Activated T-helper 2 cell treated with anti-CD3 and anti-CD28 coated beads, Interferon-gamma antibody, Interleukin-2, Interleukin-4, amounts not matched to agents 10 μg/mL and 5 μg/mL and 100 μg/mL, durations not matched to agents 14 hours and 24 hours and 36 hours (primary cell): ENCODE measurements at regions of chr12 and their contacts with region 1.

Region 1: GRCh38 chr12:67441736-67442346 is 172.7 kb downstream of the CAND1 start:
- DNase-seq: peak; percentile 63
- H3K4me3 Mint-ChIP-seq: no peak overlapping the region
- H3K27ac Mint-ChIP-seq: no peak overlapping the region
- H3K4me1 Mint-ChIP-seq: peaks cover 12% of the 10 kb centered on the region
- H3K27me3 Mint-ChIP-seq: peaks cover 36% of the 10 kb centered on the region

Region 2: GRCh38 chr12:66103016-66103913 is 1338.6 kb before region 1 on chr12:
- intact Hi-C with region 1: no loop called
- DNase-seq: no peak
- H3K4me3 Mint-ChIP-seq: no peak overlapping the region
- H3K27ac Mint-ChIP-seq: no peak overlapping the region
- H3K4me1 Mint-ChIP-seq: peaks cover 3% of the 10 kb centered on the region
- H3K27me3 Mint-ChIP-seq: peaks cover 22% of the 10 kb centered on the region

Region 3: DNA sequence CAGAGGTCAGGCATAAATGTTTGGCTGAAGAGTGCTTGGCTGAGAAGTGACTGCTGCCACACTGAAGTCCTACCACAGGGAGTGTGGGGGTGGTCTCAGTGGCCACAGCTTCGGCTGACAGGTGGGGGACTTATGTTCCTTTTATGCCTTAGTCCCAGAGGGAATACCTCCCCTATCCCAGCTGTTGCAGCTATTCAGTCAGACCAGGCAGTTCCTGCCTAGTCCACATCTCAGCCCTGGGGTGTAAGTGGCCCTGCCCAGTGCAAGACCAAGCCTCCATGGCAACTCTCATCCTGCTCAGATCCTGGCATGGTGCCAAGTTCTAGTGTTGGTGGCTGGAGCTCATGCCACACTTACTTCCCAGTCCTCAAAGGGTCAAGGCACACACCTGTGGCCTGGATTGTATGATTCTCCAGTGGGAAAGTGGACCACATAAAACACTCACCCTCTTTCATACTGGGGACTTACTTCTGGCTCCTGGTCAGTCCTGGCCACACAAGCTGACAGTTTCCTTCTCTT is 334.0 kb before region 1 on chr12:
- intact Hi-C with region 1: no loop called
- DNase-seq: no peak
- H3K4me3 Mint-ChIP-seq: no peak overlapping the region
- H3K27ac Mint-ChIP-seq: no peak overlapping the region
- H3K4me1 Mint-ChIP-seq: no peaks in the 10 kb centered on the region
- H3K27me3 Mint-ChIP-seq: no peaks in the 10 kb centered on the region

Region 4: DNA sequence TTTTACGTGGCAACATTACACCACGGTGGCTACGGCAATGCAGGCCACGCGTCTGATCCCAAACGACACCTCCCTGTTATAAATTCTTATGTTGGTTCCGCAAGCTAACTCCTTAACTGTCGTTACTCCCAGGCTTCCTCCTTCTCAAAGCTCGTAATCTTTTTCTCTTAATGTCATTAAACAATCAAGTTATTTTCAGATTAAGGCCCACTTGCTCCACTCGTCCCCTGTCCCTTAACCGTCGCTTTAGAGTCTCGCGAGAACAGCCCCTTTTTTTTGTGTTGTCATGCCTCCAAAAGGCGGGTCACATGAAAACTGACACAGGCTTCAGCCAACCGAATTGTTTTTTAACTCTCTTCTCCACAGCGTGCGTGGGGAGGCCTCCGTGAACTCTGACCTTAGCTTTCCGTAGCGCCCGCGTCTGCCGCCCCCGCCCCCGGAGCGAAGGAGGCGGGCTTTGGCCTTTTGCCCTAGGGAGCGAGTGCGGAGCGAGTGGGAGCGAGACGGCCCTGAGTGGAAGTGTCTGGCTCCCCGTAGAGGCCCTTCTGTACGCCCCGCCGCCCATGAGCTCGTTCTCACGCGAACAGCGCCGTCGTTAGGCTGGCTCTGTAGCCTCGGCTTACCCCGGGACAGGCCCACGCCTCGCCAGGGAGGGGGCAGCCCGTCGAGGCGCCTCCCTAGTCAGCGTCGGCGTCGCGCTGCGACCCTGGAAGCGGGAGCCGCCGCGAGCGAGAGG is 172.8 kb before region 1 on chr12 and contains the start of gene CAND1:
- intact Hi-C with region 1: loop called (anchors 10 kb)
- DNase-seq: peak; percentile 94
- H3K4me3 Mint-ChIP-seq: peak within 1 kb of the TSS; percentile 89
- H3K27ac Mint-ChIP-seq: peak within 1 kb of the TSS; percentile 99
- H3K4me1 Mint-ChIP-seq: peaks cover 31% of the 10 kb centered on the region
- H3K27me3 Mint-ChIP-seq: no peaks in the 10 kb centered on the region
- total RNA-seq, gene CAND1: 197 and 198 TPM in 2 replicates

Region 5: GRCh38 chr12:67355578-67356379 is 86.1 kb before region 1 on chr12:
- intact Hi-C with region 1: loop called (anchors 5 kb)
- DNase-seq: no peak
- H3K4me3 Mint-ChIP-seq: no peak overlapping the region
- H3K27ac Mint-ChIP-seq: no peak overlapping the region
- H3K4me1 Mint-ChIP-seq: peaks cover 24% of the 10 kb centered on the region
- H3K27me3 Mint-ChIP-seq: peaks cover 6% of the 10 kb centered on the region

Region 6: DNA sequence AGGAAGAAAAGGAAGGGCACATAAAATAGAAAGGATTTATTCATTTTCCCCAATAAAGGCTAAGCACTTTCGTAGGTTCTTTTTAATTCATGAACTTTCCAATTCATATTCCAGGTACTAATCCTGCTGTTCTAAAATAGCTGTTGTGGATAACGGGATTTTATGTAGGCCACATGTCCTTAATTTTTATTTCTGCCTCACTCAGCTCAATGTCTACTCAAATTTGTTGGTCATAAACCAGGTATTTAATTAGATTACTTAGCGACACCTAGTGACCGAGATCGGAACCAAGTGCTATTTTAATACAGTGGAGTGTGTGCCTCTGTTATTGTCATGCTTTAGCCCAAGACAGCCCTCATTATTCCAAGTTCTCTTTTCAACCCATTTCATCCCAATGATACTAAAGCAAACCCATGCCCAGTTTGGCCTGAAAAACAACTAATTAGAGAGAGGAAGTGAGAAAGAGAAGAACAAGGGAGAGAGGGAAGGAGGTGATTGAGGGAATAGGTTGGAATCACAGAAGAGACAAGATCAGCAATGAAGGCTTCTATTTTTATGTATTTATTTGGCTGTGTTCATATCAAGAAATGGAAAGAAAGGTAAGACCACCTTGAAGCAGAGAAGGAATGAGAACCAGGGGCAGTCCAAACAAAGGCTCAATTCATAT is 501.5 kb after region 1 on chr12:
- intact Hi-C with region 1: loop called (anchors 2 kb)
- DNase-seq: peak; percentile 18
- H3K4me3 Mint-ChIP-seq: no peak overlapping the region
- H3K27ac Mint-ChIP-seq: no peak overlapping the region
- H3K4me1 Mint-ChIP-seq: peaks cover 1% of the 10 kb centered on the region
- H3K27me3 Mint-ChIP-seq: peaks cover 16% of the 10 kb centered on the region